Uterus (tissue), 4 donors: ENCODE measurements at regions of chr5 and their contacts with region 1.

Region 1: DNA sequence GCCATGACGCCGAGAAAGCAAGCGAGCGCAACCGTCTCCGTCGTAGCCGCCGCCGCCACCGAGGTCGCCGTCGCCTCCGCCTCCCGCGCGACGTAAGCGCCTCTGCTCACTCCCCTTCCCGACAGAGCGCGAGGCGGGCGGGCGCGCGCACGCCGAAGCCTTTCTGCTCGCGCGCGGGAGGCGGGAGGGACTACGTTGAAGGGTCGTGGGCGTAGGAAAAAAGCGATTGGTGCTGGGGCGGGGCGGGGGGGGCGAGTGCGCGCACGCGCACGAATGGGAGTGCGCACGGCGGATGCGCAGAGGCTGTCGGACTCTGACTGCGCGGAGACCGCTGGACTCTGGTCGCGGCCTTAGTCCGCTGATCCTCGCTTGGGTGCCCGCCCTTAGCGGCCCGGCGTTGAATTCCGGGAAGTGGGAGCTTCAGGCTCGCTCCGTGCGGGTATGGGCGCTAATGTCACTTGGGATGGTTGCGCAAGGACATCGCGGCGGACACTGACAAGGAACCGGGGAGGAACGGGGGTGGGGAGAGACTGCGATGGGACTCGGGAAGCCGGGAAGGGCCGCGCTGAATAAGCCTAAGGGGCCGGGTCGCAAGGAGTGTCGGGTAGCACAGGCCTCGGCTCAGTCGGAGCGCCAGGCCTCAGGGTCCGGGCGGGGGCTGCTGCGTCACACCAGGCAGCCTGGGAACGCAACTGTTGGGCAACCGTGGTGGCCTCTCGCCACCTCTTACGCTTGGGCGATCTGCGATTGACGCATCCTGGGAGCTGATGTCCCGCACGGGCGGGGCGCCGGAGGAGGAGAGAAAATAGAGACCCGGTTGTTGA is at the start of gene CHD1:
- DNase-seq: peak; percentile 95 to 96
- H3K4me3 ChIP-seq: peak within 1 kb of the TSS; percentile 89
- H3K27ac ChIP-seq: peak within 1 kb of the TSS; percentile 98 to 100
- H3K4me1 ChIP-seq: peaks cover 0 to 14% of the 10 kb centered on the region in 2 donors
- H3K27me3 ChIP-seq: no peaks in the 10 kb centered on the region
- CTCF ChIP-seq: peak in 1 of 4 experiments; percentile 16
- POLR2A ChIP-seq: peak; percentile 89 to 99
- total RNA-seq, gene CHD1: 27.4 to 149 (median 63.6) TPM

Region 2: DNA sequence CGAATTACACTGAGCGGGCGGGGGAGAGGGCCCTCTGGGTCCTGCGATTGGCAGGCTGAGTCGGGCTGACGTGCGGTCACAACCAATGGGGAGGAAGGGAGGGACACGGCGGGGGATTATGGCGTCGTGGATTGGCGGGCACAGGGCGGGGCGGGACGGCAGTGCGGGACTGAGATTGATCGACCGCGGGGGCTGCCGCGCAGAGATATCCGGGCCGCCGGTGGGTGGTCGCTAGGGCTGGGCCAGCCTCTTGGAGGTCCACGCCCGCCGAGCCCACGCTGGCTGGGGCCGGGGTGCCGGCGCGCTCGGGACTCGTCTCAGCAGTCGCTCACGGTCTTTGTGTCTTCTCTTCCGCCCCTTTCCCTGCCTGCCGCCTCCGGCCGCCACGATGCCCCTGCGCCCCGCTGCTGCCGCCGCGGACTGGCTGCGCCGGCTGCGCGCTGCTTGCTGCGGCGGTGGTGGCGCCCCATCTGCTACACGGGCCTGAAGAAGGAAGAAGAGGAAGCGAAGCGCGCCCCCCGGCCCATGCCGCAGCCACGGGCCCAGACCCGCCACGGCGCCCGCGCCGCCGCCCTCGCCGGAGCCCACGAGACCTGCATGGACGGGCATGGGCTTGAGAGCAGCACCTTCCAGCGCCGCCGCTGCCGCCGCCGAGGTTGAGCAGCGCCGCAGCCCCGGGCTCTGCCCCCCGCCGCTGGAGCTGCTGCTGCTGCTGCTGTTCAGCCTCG is 155.5 kb before region 1 on chr5 and contains the start of gene RGMB:
- intact Hi-C with region 1: loop called (anchors 10 kb)
- DNase-seq: peak; percentile 97 to 98
- H3K4me3 ChIP-seq: peak within 1 kb of the TSS; percentile 55 to 97
- H3K27ac ChIP-seq: peak within 1 kb of the TSS; percentile 86 to 97
- H3K4me1 ChIP-seq: peaks cover 0 to 15% of the 10 kb centered on the region in 2 donors
- H3K27me3 ChIP-seq: no peaks in the 10 kb centered on the region
- CTCF ChIP-seq: peak in 3 of 4 experiments; percentile 3 to 21 (median 5)
- POLR2A ChIP-seq: peak; percentile 87 to 93
- total RNA-seq, gene RGMB: 2.8 to 22.3 (median 12.9) TPM